AG04449 (cell line): ENCODE measurements at regions of chr5 and their contacts with region 1.

Region 1: GRCh38 chr5:10283927-10284635 is 23.6 kb downstream of the CMBL start:
- DNase-seq: no peak
- H3K4me3 ChIP-seq: no peak overlapping the region
- CTCF ChIP-seq: peak; percentile 96

Region 2: DNA sequence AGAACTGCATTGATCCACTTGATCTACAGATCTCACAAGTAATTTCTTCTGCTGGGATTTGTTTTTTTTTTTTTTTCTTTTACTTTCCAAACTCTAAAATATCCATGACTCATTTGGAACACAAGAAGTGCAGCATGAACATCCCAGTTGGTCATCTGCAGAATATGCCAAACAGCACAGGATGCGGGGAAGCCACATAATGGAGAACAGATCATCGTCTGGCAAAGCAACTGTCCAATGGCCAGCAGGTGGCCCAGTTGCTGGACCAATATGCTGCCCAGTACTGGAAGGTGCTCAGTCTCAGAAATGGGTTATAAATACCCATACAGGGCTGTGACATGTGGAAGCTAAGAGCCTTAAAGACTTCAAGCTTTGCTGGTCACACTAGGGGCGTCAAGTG is 432.6 kb before region 1 on chr5:
- CTCF ChIA-PET with region 1: no interaction called
- POLR2A ChIA-PET with region 1: no interaction called
- DNase-seq: peak; percentile 84
- H3K4me3 ChIP-seq: no peak overlapping the region
- CTCF ChIP-seq: peak; percentile 59

Region 3: DNA sequence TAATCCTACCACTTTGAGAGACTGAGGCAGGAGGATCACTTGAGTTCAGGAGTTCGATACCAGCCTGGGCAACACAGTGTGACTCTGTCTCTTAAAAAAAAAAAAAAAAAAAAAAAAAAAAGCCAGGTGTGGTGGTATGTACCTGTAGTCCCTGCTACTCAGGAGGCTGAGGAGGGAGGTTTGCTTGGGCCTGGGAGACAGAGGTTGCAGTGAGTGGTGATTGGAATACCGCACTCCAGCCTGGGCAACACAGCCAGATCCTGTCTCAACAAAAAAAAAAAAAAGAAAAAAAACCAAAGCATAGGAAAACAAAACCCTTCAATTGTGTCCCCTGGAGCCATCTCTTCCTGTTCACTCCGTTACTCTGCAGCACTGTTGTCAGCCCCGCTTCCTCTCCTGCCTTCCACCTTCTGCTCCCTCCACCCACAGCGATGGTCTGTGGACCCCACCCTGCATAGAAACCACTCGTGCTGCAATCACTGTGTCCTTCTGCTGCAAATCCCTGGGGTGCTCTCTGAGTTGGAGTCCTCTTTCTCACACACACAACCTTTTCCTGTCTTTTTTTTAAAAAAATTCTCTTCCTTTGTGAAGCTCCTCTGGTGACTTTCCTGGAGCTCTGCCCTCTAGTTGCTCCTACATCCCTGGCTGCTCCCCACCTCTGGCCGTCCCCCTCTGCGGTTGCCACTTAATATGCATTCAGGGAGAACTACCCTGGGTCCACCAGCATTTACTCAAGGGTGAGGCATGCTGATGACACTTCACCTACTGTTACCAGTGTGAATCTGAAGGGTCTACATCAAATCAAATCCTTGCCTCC is 11.8 kb before region 1 on chr5:
- CTCF ChIA-PET with region 1: interaction called, 17 read pairs
- POLR2A ChIA-PET with region 1: no interaction called
- DNase-seq: no peak
- H3K4me3 ChIP-seq: no peak overlapping the region
- CTCF ChIP-seq: no peak

Region 4: GRCh38 chr5:10303699-10304170 is 19.7 kb after region 1 on chr5:
- CTCF ChIA-PET with region 1: interaction called, 22 read pairs
- POLR2A ChIA-PET with region 1: no interaction called
- DNase-seq: no peak
- H3K4me3 ChIP-seq: no peak overlapping the region
- CTCF ChIP-seq: no peak

Region 5: DNA sequence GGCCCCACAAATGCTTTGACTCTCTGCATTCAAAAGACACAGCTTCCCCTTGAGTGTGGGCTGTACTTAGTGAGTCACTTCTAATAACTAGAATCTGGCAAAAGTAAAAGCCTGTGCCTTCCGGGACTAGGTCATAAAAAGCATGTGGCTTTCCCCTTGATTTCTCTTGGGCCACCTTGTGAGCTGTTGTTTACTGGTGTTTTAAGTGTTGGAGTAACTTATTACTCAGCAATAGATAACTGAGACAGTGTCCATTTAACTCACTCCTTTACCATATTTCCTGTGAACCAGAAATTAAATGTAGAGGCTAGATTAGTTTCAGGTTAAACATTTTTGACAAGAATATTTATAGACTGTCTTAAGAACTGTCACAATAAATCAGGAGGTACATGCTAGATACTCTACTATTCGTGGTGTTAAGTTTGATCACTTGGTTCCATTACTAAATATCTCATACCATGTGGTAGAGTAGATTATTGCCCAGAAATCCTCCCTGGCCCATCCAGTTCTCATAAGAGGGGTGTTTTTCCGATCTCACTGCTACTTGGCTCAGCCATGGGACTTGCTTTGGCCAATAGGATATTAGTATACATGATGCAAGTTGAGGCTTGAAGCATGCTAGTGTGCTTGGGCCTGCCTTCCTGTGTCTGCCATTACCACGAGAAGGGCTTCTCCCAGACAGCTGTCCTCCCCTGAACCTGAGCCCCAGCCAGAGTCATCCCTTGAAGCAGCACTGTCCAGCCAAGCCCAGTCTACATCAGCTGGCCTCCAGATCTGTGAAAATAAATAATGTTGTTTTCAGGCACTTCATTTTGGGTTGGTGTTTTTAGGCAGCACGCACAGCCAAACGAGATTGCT is 34.0 kb after region 1 on chr5:
- CTCF ChIA-PET with region 1: interaction called, 11 read pairs
- POLR2A ChIA-PET with region 1: no interaction called
- DNase-seq: no peak
- H3K4me3 ChIP-seq: no peak overlapping the region
- CTCF ChIP-seq: no peak

Region 6: GRCh38 chr5:10358999-10359398 is 74.9 kb after region 1 on chr5:
- CTCF ChIA-PET with region 1: interaction called, 23 read pairs
- POLR2A ChIA-PET with region 1: no interaction called
- DNase-seq: no peak
- H3K4me3 ChIP-seq: no peak overlapping the region
- CTCF ChIP-seq: no peak

Region 7: DNA sequence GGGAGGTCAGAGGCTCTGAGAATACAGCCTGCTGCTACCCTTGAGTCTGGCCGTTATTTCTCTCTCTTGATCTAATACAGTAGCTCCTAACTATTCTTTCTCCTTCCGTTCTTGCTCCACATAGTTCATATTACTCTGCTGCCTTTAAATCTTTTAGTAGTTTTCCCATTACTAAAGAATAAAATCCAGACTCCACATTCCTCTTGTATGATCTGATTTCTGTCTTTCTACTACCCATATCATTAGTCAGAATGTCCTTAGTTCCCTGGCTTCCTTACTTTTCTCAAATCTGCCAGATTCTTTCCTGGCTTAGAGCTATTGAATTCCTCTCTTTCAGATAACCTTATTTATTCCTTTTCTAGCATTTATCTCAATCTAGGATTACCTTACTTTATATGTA is 109.4 kb after region 1 on chr5:
- CTCF ChIA-PET with region 1: interaction called, 13 read pairs
- POLR2A ChIA-PET with region 1: interaction called, 3 read pairs
- DNase-seq: peak; percentile 36
- H3K4me3 ChIP-seq: no peak overlapping the region
- CTCF ChIP-seq: no peak

Region 8: GRCh38 chr5:10441083-10441991 is 157.3 kb after region 1 on chr5 and contains the start of gene ROPN1L:
- CTCF ChIA-PET with region 1: interaction called, 18 read pairs
- POLR2A ChIA-PET with region 1: no interaction called
- DNase-seq: no peak
- H3K4me3 ChIP-seq: peak within 1 kb of the TSS; percentile 72
- CTCF ChIP-seq: no peak